Activated T-helper 1 cell treated with anti-CD3 and anti-CD28 coated beads, Interleukin-12 subunit alpha, Interleukin-12 subunit beta, Interleukin-2, Interleukin-4 antibody, amounts not matched to agents 30 ng/mL and 10 ng/mL and 1 ng/mL, durations not matched to agents 14 hours and 24 hours and 36 hours (primary cell): ENCODE measurements at regions of chr9 and their contacts with region 1.

Region 1: DNA sequence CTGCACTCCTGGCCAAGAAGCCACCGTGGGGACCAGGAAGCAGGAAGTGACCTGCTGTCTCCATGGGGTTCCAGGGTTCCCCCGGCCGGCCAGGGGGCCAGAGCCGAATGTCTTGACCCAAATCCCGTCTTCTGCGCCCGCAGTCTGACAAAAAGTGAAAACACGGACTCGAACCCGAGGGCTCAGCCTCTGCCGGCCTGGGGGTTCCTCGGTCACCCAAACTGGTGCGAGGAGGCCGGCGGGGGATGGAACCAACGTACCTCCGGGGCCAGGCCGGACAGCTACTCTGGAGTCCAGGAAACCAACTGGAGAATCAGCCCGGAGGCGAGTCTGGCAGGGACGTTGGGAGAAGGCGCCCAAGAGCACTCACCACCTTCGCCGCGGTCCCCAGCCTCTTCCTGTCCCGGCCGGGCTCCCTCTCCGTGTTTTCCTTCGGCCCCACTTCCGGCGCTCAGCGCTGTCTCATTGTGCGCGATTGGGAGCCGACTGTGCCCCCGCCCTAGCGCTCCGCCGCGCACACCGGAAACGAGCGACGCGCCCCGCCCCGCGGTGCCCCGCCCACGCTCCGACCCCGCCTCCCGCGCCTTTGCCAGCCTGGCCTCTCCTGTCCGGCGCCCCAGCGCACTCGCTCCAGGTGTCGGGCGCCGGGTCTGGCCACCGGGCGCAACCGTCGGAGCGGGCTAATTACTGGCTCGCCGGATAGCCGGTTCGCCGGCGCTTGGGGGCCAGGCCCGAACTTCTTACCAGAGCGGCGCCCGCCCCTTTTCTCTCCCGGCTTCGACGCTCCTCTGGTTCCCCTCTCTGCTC is at the start of gene TUT7:
- DNase-seq: peak; percentile 95
- H3K4me3 Mint-ChIP-seq: peak within 1 kb of the TSS; percentile 99
- H3K27ac Mint-ChIP-seq: peak within 1 kb of the TSS; percentile 100
- H3K4me1 Mint-ChIP-seq: peaks cover 41% of the 10 kb centered on the region
- H3K27me3 Mint-ChIP-seq: peaks cover 20% of the 10 kb centered on the region
- total RNA-seq, gene TUT7: 44.1 and 44.5 TPM in 2 replicates

Region 2: GRCh38 chr9:85940832-85941621 is 413.2 kb before region 1 on chr9 and contains the start of gene NAA35:
- intact Hi-C with region 1: loop called (anchors 1 kb)
- DNase-seq: peak; percentile 99
- H3K4me3 Mint-ChIP-seq: no peak within 1 kb of the TSS
- H3K27ac Mint-ChIP-seq: peak within 1 kb of the TSS; percentile 97
- H3K4me1 Mint-ChIP-seq: peaks cover 16% of the 10 kb centered on the region
- H3K27me3 Mint-ChIP-seq: no peaks in the 10 kb centered on the region
- total RNA-seq, gene NAA35: 28.6 and 32.9 TPM in 2 replicates

Region 3: GRCh38 chr9:86282077-86282978 is 71.9 kb before region 1 on chr9 and contains the start of gene ISCA1:
- intact Hi-C with region 1: loop called (anchors 1 kb)
- DNase-seq: peak; percentile 91
- H3K4me3 Mint-ChIP-seq: peak within 1 kb of the TSS; percentile 89
- H3K27ac Mint-ChIP-seq: peak within 1 kb of the TSS; percentile 96
- H3K4me1 Mint-ChIP-seq: peaks cover 42% of the 10 kb centered on the region
- H3K27me3 Mint-ChIP-seq: no peaks in the 10 kb centered on the region
- total RNA-seq, gene ISCA1: 27.4 and 30.3 TPM in 2 replicates

Region 4: GRCh38 chr9:86337469-86338108 is 16.6 kb before region 1 on chr9:
- intact Hi-C with region 1: loop called (anchors 1 kb)
- DNase-seq: no peak
- H3K4me3 Mint-ChIP-seq: peak overlapping the region; percentile 83
- H3K27ac Mint-ChIP-seq: peak overlapping the region; percentile 63
- H3K4me1 Mint-ChIP-seq: peaks cover 46% of the 10 kb centered on the region
- H3K27me3 Mint-ChIP-seq: no peaks in the 10 kb centered on the region

Region 5: GRCh38 chr9:86376016-86376415 is 21.8 kb after region 1 on chr9:
- intact Hi-C with region 1: no loop called
- DNase-seq: no peak
- H3K4me3 Mint-ChIP-seq: no peak overlapping the region
- H3K27ac Mint-ChIP-seq: no peak overlapping the region
- H3K4me1 Mint-ChIP-seq: no peaks in the 10 kb centered on the region
- H3K27me3 Mint-ChIP-seq: peaks cover 22% of the 10 kb centered on the region

Region 6: GRCh38 chr9:86948074-86948929 is 594.1 kb after region 1 on chr9:
- intact Hi-C with region 1: loop called (anchors 5 kb)
- DNase-seq: peak; percentile 54
- H3K4me3 Mint-ChIP-seq: peak overlapping the region; percentile 84
- H3K27ac Mint-ChIP-seq: no peak overlapping the region
- H3K4me1 Mint-ChIP-seq: peaks cover 10% of the 10 kb centered on the region
- H3K27me3 Mint-ChIP-seq: peaks cover 21% of the 10 kb centered on the region

Region 7: DNA sequence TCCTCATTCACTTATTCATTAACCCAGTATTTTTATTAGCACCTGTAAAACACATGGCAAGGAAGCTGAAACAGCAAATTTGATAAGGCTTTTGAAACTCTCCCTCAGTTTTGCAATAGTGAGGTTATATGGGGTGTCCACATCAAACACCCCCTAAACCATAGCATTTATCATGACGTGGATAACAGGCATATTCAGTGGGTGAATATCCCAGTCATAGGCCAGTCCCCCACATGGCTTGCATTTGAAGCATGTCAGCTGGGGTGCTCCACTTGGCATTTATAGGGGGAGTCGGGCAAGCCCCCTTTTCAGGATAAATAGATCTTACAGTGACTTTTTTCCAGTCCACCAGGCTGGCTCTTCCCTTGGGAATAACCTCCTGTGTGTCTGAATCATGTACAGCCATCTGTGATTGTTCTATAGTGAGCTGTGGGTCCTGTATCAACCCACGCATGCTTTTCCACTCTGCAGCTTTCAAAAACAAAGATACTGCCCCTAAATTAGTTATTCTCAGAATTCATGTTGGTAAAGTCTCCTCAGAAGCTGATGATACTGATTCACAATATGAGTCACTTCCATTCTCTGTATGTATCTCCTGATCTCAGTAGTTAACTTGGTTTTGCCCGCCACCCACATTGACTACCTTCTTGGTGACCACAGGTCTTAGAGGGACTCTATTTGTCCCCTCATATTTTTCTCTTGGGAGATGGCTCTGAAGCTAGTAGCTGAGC is 1949.7 kb after region 1 on chr9:
- intact Hi-C with region 1: loop called (anchors 5 kb)
- DNase-seq: peak; percentile 48
- H3K4me3 Mint-ChIP-seq: peak overlapping the region; percentile 40
- H3K27ac Mint-ChIP-seq: peak overlapping the region; percentile 87
- H3K4me1 Mint-ChIP-seq: peaks cover 52% of the 10 kb centered on the region
- H3K27me3 Mint-ChIP-seq: peaks cover 2% of the 10 kb centered on the region